ENCODE measurements at regions of chrX and their contacts with region 1.

Region 1: GRCh38 chrX:15686818-15687685 is 22.4 kb upstream of the CLTRN start:
- DNase-seq: peak; percentile 64
- H3K4me3 Mint-ChIP-seq: no peak overlapping the region
- H3K27ac Mint-ChIP-seq: no peak overlapping the region
- H3K4me1 Mint-ChIP-seq: peaks cover 8% of the 10 kb centered on the region
- H3K27me3 Mint-ChIP-seq: no peaks in the 10 kb centered on the region

Region 2: DNA sequence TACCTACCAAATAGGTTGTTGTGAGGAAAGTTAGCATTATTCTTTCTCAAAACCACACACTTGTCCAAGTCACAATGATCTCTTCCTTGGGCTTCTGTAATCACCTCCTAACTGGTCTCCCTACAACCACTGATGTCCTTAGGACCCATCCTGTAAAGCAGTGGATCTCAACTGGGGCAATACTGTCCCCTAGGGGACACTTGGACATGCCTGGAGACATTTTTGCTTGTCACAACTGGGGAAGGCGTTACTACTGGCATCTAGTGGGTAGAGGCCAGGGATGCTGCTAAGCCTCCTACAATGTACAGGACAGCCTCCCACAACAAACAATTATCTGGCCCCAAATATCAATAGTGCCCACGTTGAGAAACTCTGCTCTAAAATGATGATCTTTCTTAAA is 286.2 kb after region 1 on chrX:
- CTCF ChIA-PET with region 1: no interaction called
- intact Hi-C with region 1: loop called (anchors 1 kb)
- DNase-seq: peak; percentile 39
- H3K4me3 Mint-ChIP-seq: no peak overlapping the region
- H3K27ac Mint-ChIP-seq: no peak overlapping the region
- H3K4me1 Mint-ChIP-seq: peaks cover 6% of the 10 kb centered on the region
- H3K27me3 Mint-ChIP-seq: no peaks in the 10 kb centered on the region

Region 3: DNA sequence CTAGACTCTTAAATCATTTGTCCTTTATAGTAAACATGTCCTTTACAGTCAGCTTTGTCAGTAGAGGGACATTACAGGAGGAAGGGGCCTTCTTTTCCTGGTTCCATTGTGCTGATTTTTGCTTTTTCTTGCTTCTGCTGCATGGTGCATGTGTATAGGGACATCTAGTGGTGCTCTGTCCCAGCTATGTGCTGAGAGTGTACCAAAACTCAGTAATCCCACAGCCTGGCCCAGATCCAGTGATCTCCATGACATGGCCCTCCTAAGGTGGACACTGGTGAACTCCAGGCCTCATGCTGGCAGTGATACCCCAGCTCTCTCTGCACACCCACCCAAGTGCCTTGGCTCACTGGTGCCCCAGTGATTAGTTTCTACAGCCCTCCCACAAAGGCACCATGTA is 525.4 kb after region 1 on chrX:
- CTCF ChIA-PET with region 1: no interaction called
- intact Hi-C with region 1: loop called (anchors 5 kb)
- DNase-seq: peak; percentile 5
- H3K4me3 Mint-ChIP-seq: no peak overlapping the region
- H3K27ac Mint-ChIP-seq: no peak overlapping the region
- H3K4me1 Mint-ChIP-seq: no peaks in the 10 kb centered on the region
- H3K27me3 Mint-ChIP-seq: no peaks in the 10 kb centered on the region

Region 4: GRCh38 chrX:16436348-16437188 is 749.5 kb after region 1 on chrX:
- CTCF ChIA-PET with region 1: no interaction called
- intact Hi-C with region 1: loop called (anchors 10 kb)
- DNase-seq: peak; percentile 84
- H3K4me3 Mint-ChIP-seq: no peak overlapping the region
- H3K27ac Mint-ChIP-seq: no peak overlapping the region
- H3K4me1 Mint-ChIP-seq: peaks cover 11% of the 10 kb centered on the region
- H3K27me3 Mint-ChIP-seq: no peaks in the 10 kb centered on the region

Region 5: DNA sequence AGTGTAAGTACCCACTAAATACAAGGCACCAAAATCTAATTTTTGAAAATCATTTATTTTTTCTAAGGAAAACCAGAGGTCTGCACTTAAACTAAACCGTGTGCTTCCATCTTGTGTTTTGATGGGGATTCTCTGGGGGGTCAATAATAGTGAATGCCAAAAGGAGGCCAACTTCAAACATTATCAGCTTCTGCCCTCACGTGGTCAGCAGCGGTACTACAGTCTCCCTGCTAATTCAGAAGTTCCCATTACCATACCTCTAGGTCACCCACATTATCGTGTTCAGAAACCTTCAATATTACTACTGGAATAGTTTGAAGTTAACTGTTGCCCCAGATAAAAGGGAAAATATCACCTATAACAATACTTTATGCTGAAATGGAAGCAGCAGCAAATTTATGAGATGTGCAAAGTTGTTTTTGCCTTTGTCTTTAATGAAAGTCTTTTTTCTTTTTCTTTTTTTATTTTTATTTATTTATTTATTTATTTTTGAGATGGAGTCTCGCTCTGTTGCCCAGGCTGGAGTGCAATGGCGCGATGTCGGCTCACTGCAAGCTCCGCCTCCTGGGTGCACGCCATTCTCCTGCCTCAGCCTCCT is 1008.1 kb after region 1 on chrX:
- CTCF ChIA-PET with region 1: no interaction called
- intact Hi-C with region 1: loop called (anchors 10 kb)
- DNase-seq: peak; percentile 74
- H3K4me3 Mint-ChIP-seq: no peak overlapping the region
- H3K27ac Mint-ChIP-seq: no peak overlapping the region
- H3K4me1 Mint-ChIP-seq: no peaks in the 10 kb centered on the region
- H3K27me3 Mint-ChIP-seq: no peaks in the 10 kb centered on the region

Measured in activated naive CD4-positive, alpha-beta T cell treated with anti-CD3 and anti-CD28 coated beads for 36 hours (primary cell).